Sigmoid colon (tissue), 7 donors: ENCODE measurements at regions of chr19 and their contacts with region 1.

Region 1: GRCh38 chr19:33143897-33144405 is 12.0 kb downstream of the WDR88 start:
- DNase-seq: peak; percentile 84
- H3K4me3 ChIP-seq: no peak overlapping the region
- H3K27ac ChIP-seq: no peak overlapping the region
- H3K4me1 ChIP-seq: peaks cover 0 to 4% (median 0%) of the 10 kb centered on the region in 4 donors
- H3K27me3 ChIP-seq: peaks cover 0 to 9% (median 0%) of the 10 kb centered on the region in 3 donors
- CTCF ChIP-seq: peak; percentile 89 to 95 (median 94)
- EP300 ChIP-seq: no peak
- POLR2A ChIP-seq: no peak

Region 2: GRCh38 chr19:33098023-33098652 is 45.8 kb before region 1 on chr19:
- intact Hi-C with region 1: no loop called
- DNase-seq: no peak
- H3K4me3 ChIP-seq: no peak overlapping the region
- H3K27ac ChIP-seq: no peak overlapping the region
- H3K4me1 ChIP-seq: no peaks in the 10 kb centered on the region
- H3K27me3 ChIP-seq: no peaks in the 10 kb centered on the region
- CTCF ChIP-seq: no peak
- EP300 ChIP-seq: no peak
- POLR2A ChIP-seq: no peak

Region 3: DNA sequence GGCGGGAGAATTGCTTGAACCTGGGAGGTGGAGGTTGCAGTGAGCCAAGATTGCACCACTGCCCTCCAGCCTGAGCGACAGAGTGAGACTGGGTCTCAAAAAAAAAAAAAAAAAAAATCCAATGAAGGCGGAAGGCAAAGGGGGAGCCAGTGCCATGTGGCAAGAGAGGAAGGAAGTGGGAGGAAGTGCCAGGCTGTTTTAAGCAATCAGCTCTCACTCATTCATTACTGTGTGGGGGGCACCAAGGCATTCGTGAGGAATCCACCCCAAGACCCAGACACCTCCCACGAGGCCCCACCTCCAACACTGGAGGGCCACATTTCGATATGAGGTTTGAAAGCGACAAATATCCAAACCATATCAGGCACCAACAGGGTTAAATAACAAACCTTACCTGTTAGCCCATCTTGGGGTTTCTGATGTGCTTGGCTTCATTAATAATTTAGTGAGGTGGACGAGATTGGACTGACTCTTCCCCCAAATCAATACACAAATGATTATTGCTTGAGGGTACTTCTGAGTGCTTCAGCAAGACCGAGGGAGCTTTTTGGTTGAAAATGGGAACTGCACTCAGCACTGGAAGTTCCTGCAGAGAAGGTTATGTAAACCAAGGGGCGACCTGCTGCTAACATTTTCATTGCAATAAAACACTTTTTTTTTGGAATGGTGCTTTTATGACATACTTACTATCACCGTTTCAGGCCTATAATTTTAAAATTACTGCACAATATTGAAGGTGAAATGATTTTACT is 42.7 kb after region 1 on chr19:
- intact Hi-C with region 1: loop called (anchors 2 kb)
- DNase-seq: no peak
- H3K4me3 ChIP-seq: no peak overlapping the region
- H3K27ac ChIP-seq: no peak overlapping the region
- H3K4me1 ChIP-seq: peaks cover 0 to 6% (median 0%) of the 10 kb centered on the region in 4 donors
- H3K27me3 ChIP-seq: no peaks in the 10 kb centered on the region
- CTCF ChIP-seq: no peak
- EP300 ChIP-seq: no peak
- POLR2A ChIP-seq: no peak